CD4-positive, alpha-beta T cell (primary cell): ENCODE measurements at regions of chr1 and their contacts with region 1.

Region 1: GRCh38 chr1:40862008-40862863 is at the start of gene CITED4:
- DNase-seq: peak; percentile 93 to 99 (median 97)
- ATAC-seq: peak; percentile 94
- H3K4me3 ChIP-seq: peak within 1 kb of the TSS; percentile 82
- H3K4me3 Mint-ChIP-seq: peak within 1 kb of the TSS; percentile 95
- H3K27ac ChIP-seq: peak within 1 kb of the TSS; percentile 45 to 67
- H3K27ac Mint-ChIP-seq: peak within 1 kb of the TSS; percentile 96
- H3K4me1 ChIP-seq: peaks cover 20% of the 10 kb centered on the region
- H3K4me1 Mint-ChIP-seq: peaks cover 24% of the 10 kb centered on the region
- H3K27me3 ChIP-seq: no peaks in the 10 kb centered on the region
- H3K27me3 Mint-ChIP-seq: no peaks in the 10 kb centered on the region
- CTCF ChIP-seq: no peak
- total RNA-seq, gene CITED4: 51.6 to 52.0 TPM

Region 2: GRCh38 chr1:40668769-40669525 is 193.3 kb before region 1 on chr1:
- CTCF ChIA-PET with region 1: no interaction called
- POLR2A ChIA-PET with region 1: no interaction called
- intact Hi-C with region 1: loop called in 1 of 2 experiments (anchors 5 kb)
- DNase-seq: peak; percentile 72 to 91 (median 82)
- ATAC-seq: peak; percentile 78
- H3K4me3 ChIP-seq: peak overlapping the region; percentile 36
- H3K4me3 Mint-ChIP-seq: peak overlapping the region; percentile 69
- H3K27ac ChIP-seq: no peak overlapping the region
- H3K27ac Mint-ChIP-seq: no peak overlapping the region
- H3K4me1 ChIP-seq: peaks cover 23% of the 10 kb centered on the region
- H3K4me1 Mint-ChIP-seq: peaks cover 20% of the 10 kb centered on the region
- H3K27me3 ChIP-seq: no peaks in the 10 kb centered on the region
- H3K27me3 Mint-ChIP-seq: no peaks in the 10 kb centered on the region
- CTCF ChIP-seq: peak; percentile 94

Region 3: GRCh38 chr1:40802078-40802741 is 60.0 kb before region 1 on chr1:
- CTCF ChIA-PET with region 1: no interaction called
- POLR2A ChIA-PET with region 1: interaction called, 21 read pairs
- intact Hi-C with region 1: loop called in 1 of 2 experiments (anchors 1 kb)
- DNase-seq: peak; percentile 74 to 95 (median 85)
- ATAC-seq: peak; percentile 91
- H3K4me3 ChIP-seq: peak overlapping the region; percentile 53
- H3K4me3 Mint-ChIP-seq: peak overlapping the region; percentile 84
- H3K27ac ChIP-seq: peak overlapping the region; percentile 49 to 55
- H3K27ac Mint-ChIP-seq: peak overlapping the region; percentile 81
- H3K4me1 ChIP-seq: peaks cover 30% of the 10 kb centered on the region
- H3K4me1 Mint-ChIP-seq: peaks cover 32% of the 10 kb centered on the region
- H3K27me3 ChIP-seq: no peaks in the 10 kb centered on the region
- H3K27me3 Mint-ChIP-seq: no peaks in the 10 kb centered on the region
- CTCF ChIP-seq: no peak

Region 4: GRCh38 chr1:40830419-40830943 is 31.8 kb before region 1 on chr1:
- CTCF ChIA-PET with region 1: no interaction called
- POLR2A ChIA-PET with region 1: no interaction called
- intact Hi-C with region 1: no loop called
- DNase-seq: no peak
- ATAC-seq: no peak
- H3K4me3 ChIP-seq: no peak overlapping the region
- H3K4me3 Mint-ChIP-seq: no peak overlapping the region
- H3K27ac ChIP-seq: no peak overlapping the region
- H3K27ac Mint-ChIP-seq: no peak overlapping the region
- H3K4me1 ChIP-seq: peaks cover 10% of the 10 kb centered on the region
- H3K4me1 Mint-ChIP-seq: peaks cover 11% of the 10 kb centered on the region
- H3K27me3 ChIP-seq: no peaks in the 10 kb centered on the region
- H3K27me3 Mint-ChIP-seq: no peaks in the 10 kb centered on the region
- CTCF ChIP-seq: no peak

Region 5: DNA sequence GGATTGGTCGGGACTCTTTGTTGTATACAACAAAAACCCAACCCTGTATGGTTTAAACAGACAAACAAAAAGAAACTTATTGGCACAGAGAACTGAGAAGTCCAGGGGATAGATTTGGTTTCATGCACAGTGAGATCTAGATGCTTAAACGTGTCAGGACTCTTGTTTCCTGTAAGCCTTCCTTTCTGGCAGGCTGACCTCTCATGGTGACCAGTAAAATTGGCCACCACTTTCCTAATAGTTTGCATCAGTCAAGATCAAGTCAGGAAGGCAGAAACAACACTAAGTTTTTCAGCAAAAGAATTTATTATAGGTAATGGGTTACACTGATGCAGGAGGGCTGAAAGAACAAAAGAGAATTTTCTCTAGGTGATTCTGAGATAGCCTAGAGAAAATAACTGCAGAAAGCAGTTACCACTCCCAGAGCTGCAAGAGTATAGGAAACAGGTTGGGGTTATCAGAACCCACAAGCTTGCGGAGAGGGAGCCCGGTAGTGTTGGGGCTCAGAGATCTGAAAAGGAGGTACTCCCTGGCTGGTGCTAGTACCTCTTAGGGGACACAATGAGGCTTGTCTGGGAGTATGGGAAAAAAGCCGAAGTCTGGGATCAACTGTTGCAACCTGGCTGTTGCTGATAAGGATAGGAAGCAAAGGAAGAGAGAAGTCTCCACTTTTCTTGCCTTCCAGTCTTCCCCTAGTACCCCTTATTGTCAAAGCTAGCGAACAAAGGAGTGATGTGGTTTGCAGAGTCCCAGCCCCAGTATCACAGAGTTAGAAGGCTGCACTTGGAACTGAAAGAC is 21.5 kb before region 1 on chr1:
- CTCF ChIA-PET with region 1: no interaction called
- POLR2A ChIA-PET with region 1: interaction called, 14 read pairs
- intact Hi-C with region 1: no loop called
- DNase-seq: peak in 1 of 14 experiments; percentile 30
- ATAC-seq: peak; percentile 83
- H3K4me3 ChIP-seq: no peak overlapping the region
- H3K4me3 Mint-ChIP-seq: peak overlapping the region; percentile 31
- H3K27ac ChIP-seq: no peak overlapping the region
- H3K27ac Mint-ChIP-seq: peak overlapping the region; percentile 13
- H3K4me1 ChIP-seq: peaks cover 13% of the 10 kb centered on the region
- H3K4me1 Mint-ChIP-seq: peaks cover 41% of the 10 kb centered on the region
- H3K27me3 ChIP-seq: no peaks in the 10 kb centered on the region
- H3K27me3 Mint-ChIP-seq: no peaks in the 10 kb centered on the region
- CTCF ChIP-seq: no peak

Region 6: GRCh38 chr1:40877698-40878097 is 15.5 kb after region 1 on chr1:
- CTCF ChIA-PET with region 1: no interaction called
- POLR2A ChIA-PET with region 1: interaction called, 23 read pairs
- intact Hi-C with region 1: no loop called
- DNase-seq: peak in 3 of 14 experiments; percentile 14 to 64 (median 42)
- ATAC-seq: no peak
- H3K4me3 ChIP-seq: no peak overlapping the region
- H3K4me3 Mint-ChIP-seq: no peak overlapping the region
- H3K27ac ChIP-seq: no peak overlapping the region
- H3K27ac Mint-ChIP-seq: no peak overlapping the region
- H3K4me1 ChIP-seq: peaks cover 32% of the 10 kb centered on the region
- H3K4me1 Mint-ChIP-seq: peaks cover 16% of the 10 kb centered on the region
- H3K27me3 ChIP-seq: peaks cover 8 to 10% of the 10 kb centered on the region in 2 experiments
- H3K27me3 Mint-ChIP-seq: peaks cover 11% of the 10 kb centered on the region
- CTCF ChIP-seq: no peak

Region 7: GRCh38 chr1:41184451-41184850 is 322.2 kb after region 1 on chr1:
- CTCF ChIA-PET with region 1: no interaction called
- POLR2A ChIA-PET with region 1: no interaction called
- intact Hi-C with region 1: no loop called
- DNase-seq: no peak
- ATAC-seq: no peak
- H3K4me3 ChIP-seq: no peak overlapping the region
- H3K4me3 Mint-ChIP-seq: no peak overlapping the region
- H3K27ac ChIP-seq: no peak overlapping the region
- H3K27ac Mint-ChIP-seq: no peak overlapping the region
- H3K4me1 ChIP-seq: no peaks in the 10 kb centered on the region
- H3K4me1 Mint-ChIP-seq: no peaks in the 10 kb centered on the region
- H3K27me3 ChIP-seq: no peaks in the 10 kb centered on the region
- H3K27me3 Mint-ChIP-seq: no peaks in the 10 kb centered on the region
- CTCF ChIP-seq: no peak